A673 (cell line): ENCODE measurements at regions of chr19 and their contacts with region 1.

Region 1: DNA sequence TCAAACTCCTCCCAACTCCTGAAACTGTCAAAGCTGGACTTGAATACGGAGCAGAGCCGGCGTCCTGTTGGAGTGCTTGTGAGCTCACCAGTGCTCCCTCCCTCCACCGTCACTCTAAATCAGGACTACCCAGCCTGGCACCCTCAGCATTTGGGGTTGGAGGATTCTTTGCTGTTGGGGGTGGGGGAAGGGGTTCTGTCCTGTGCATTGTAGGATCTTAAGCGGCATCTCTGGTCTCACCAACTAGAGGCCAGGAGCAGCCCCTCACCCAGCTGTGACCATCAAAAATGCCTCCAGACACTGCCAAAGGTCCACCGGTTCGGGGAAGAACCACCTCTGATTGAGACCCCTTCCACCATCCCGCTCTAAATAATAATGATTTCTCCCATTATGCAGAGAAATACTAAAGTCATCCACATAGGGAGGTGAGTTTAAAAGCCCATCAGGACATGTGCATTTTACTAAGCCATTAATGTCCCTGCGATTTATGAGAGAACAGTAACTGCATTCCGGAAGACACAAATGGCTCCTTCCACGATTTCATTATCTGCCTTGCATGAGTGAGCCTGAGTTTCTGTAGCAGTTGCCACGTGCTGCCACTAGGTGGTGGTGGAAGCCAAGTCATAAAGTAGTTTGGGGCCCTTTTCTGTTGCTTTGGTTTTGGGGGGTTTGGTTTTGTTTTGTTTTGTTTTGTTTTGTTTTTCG is 16.1 kb upstream of the USP29 start:
- DNase-seq: peak; percentile 83
- H3K4me3 ChIP-seq: peak overlapping the region; percentile 37
- H3K27ac ChIP-seq: no peak overlapping the region
- H3K4me1 ChIP-seq: no peaks in the 10 kb centered on the region
- H3K27me3 ChIP-seq: peaks cover 9% of the 10 kb centered on the region
- CTCF ChIP-seq: peak; percentile 93

Region 2: GRCh38 chr19:56315078-56315828 is 788.5 kb before region 1 on chr19:
- CTCF ChIA-PET with region 1: no interaction called
- POLR2A ChIA-PET with region 1: no interaction called
- intact Hi-C with region 1: no loop called
- DNase-seq: peak; percentile 98
- H3K4me3 ChIP-seq: peak overlapping the region; percentile 57
- H3K27ac ChIP-seq: peak overlapping the region; percentile 97
- H3K4me1 ChIP-seq: peaks cover 6% of the 10 kb centered on the region
- H3K27me3 ChIP-seq: no peaks in the 10 kb centered on the region
- CTCF ChIP-seq: no peak

Region 3: GRCh38 chr19:56725829-56726424 is 377.8 kb before region 1 on chr19:
- CTCF ChIA-PET with region 1: interaction called, 4 read pairs
- POLR2A ChIA-PET with region 1: no interaction called
- intact Hi-C with region 1: loop called (anchors 5 kb)
- DNase-seq: peak; percentile 41
- H3K4me3 ChIP-seq: no peak overlapping the region
- H3K27ac ChIP-seq: no peak overlapping the region
- H3K4me1 ChIP-seq: no peaks in the 10 kb centered on the region
- H3K27me3 ChIP-seq: no peaks in the 10 kb centered on the region
- CTCF ChIP-seq: peak; percentile 63

Region 4: DNA sequence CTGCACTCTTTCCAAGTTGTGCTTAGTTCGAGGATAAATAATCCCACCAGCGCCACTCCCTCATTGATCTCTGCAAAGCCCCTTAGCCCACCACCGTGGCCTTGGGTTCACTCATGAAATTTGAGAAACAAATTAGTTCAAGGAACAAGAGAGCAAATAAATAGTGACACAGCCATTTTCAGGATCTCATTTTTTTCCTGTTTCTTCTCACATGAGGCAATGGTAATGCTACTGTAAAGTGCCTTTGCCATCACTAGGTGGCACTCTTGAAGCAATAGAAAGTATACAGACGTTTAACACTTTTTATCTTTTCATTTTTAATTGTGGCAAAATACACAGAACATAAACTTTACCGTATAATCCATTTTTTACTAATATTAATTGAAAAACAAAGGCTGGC is 355.3 kb before region 1 on chr19:
- CTCF ChIA-PET with region 1: interaction called, 11 read pairs
- POLR2A ChIA-PET with region 1: no interaction called
- intact Hi-C with region 1: loop called (anchors 1 kb)
- DNase-seq: peak; percentile 52
- H3K4me3 ChIP-seq: no peak overlapping the region
- H3K27ac ChIP-seq: no peak overlapping the region
- H3K4me1 ChIP-seq: peaks cover 11% of the 10 kb centered on the region
- H3K27me3 ChIP-seq: no peaks in the 10 kb centered on the region
- CTCF ChIP-seq: peak; percentile 64

Region 5: GRCh38 chr19:56838909-56839651 is 264.6 kb before region 1 on chr19:
- CTCF ChIA-PET with region 1: interaction called, 4 read pairs
- POLR2A ChIA-PET with region 1: no interaction called
- intact Hi-C with region 1: loop called (anchors 5 kb)
- DNase-seq: peak; percentile 97
- H3K4me3 ChIP-seq: peak overlapping the region; percentile 77
- H3K27ac ChIP-seq: peak overlapping the region; percentile 95
- H3K4me1 ChIP-seq: peaks cover 7% of the 10 kb centered on the region
- H3K27me3 ChIP-seq: no peaks in the 10 kb centered on the region
- CTCF ChIP-seq: no peak

Region 6: GRCh38 chr19:57088133-57088532 is 15.6 kb before region 1 on chr19:
- CTCF ChIA-PET with region 1: no interaction called
- POLR2A ChIA-PET with region 1: no interaction called
- intact Hi-C with region 1: no loop called
- DNase-seq: no peak
- H3K4me3 ChIP-seq: no peak overlapping the region
- H3K27ac ChIP-seq: no peak overlapping the region
- H3K4me1 ChIP-seq: no peaks in the 10 kb centered on the region
- H3K27me3 ChIP-seq: no peaks in the 10 kb centered on the region
- CTCF ChIP-seq: no peak

Region 7: DNA sequence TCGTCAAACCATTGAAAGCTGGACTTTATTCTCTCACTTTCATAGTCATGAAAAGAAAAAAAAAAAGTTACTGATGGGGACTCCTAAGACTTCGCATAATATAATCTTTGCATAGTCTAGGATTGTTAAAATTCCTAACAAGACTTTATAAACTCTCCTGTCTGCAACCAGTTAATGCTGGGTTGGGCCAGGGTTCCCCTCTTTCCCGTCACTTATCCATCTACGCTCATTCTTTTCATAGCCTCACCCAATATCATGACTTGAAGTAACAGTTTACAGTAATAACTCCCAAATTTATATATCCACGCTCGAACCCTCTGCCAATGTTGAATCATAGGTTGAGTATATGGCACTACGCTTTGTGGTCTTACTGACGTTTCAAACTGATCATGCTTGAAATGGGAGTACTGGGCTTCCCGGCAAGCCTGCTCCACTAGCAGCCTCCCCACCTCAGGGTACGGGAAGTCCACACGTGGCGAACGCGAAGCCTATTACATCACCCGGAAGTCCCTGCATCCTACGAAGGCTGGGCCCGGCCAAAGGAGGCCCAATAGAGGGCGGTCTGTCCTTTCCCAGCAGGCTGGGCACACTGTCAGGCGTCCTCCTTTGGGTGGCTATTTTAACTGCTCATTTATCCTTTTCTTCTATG is 175.8 kb after region 1 on chr19:
- CTCF ChIA-PET with region 1: no interaction called
- POLR2A ChIA-PET with region 1: interaction called, 11 read pairs
- intact Hi-C with region 1: no loop called
- DNase-seq: peak; percentile 96
- H3K4me3 ChIP-seq: peak overlapping the region; percentile 92
- H3K27ac ChIP-seq: peak overlapping the region; percentile 98
- H3K4me1 ChIP-seq: peaks cover 13% of the 10 kb centered on the region
- H3K27me3 ChIP-seq: no peaks in the 10 kb centered on the region
- CTCF ChIP-seq: peak; percentile 31; the same call in 1 of the 2 replicates

Region 8: DNA sequence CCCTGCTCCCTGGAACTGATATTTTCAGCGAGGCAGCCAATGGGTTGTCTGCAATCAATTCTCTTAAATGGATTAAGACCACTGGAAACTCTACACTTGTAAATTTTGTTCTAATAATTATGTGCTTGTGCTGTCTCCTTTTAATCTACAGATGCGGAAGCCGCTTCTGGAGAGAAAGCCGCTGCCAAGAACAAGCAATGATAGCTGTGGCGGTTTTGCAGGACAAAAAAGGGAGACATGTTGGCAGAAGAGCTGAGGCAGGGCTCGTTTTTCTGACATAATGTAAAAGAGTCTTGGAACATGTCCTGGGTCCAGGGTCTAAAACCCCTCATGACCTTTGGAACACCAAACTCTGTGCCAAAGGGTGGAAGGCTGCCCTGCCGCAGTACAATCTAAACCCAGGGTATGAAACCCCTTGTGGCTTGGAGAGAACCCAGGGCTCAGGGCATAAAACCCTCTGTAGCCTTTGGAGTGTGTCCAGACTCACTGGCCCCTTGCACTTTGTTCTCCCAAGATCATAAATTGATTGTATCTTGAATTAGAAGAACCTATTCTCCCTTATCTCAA is 800.0 kb after region 1 on chr19:
- CTCF ChIA-PET with region 1: no interaction called
- POLR2A ChIA-PET with region 1: no interaction called
- intact Hi-C with region 1: loop called (anchors 5 kb)
- DNase-seq: no peak
- H3K4me3 ChIP-seq: no peak overlapping the region
- H3K27ac ChIP-seq: no peak overlapping the region
- H3K4me1 ChIP-seq: no peaks in the 10 kb centered on the region
- H3K27me3 ChIP-seq: no peaks in the 10 kb centered on the region
- CTCF ChIP-seq: no peak

Region 9: GRCh38 chr19:58154679-58155648 is 1051.2 kb after region 1 on chr19:
- CTCF ChIA-PET with region 1: no interaction called
- POLR2A ChIA-PET with region 1: no interaction called
- intact Hi-C with region 1: loop called (anchors 2 kb)
- DNase-seq: peak; percentile 96
- H3K4me3 ChIP-seq: peak overlapping the region; percentile 87
- H3K27ac ChIP-seq: peak overlapping the region; percentile 65
- H3K4me1 ChIP-seq: no peaks in the 10 kb centered on the region
- H3K27me3 ChIP-seq: no peaks in the 10 kb centered on the region
- CTCF ChIP-seq: peak; percentile 98